ENCODE measurements at regions of chr22 and their contacts with region 1.

Region 1: GRCh38 chr22:42437488-42438292 is 5.5 kb upstream of the NFAM1 start:
- DNase-seq: peak; percentile 78 to 89
- H3K4me3 ChIP-seq: peak overlapping the region; percentile 40 to 56 (median 48)
- H3K27ac ChIP-seq: peak overlapping the region in 4 of 5 donors; percentile 35 to 65 (median 42)
- H3K4me1 ChIP-seq: peaks cover 7 to 57% (median 24%) of the 10 kb centered on the region in 4 donors
- H3K27me3 ChIP-seq: peaks cover 0 to 27% (median 0%) of the 10 kb centered on the region in 3 donors
- CTCF ChIP-seq: peak in 6 of 7 experiments; percentile 14 to 99 (median 94)
- EP300 ChIP-seq: no peak
- POLR2A ChIP-seq: no peak

Region 2: GRCh38 chr22:42101199-42101598 is 336.5 kb before region 1 on chr22:
- intact Hi-C with region 1: loop called (anchors 10 kb)
- DNase-seq: no peak
- H3K4me3 ChIP-seq: no peak overlapping the region
- H3K27ac ChIP-seq: no peak overlapping the region
- H3K4me1 ChIP-seq: no peaks in the 10 kb centered on the region
- H3K27me3 ChIP-seq: no peaks in the 10 kb centered on the region
- CTCF ChIP-seq: no peak
- EP300 ChIP-seq: no peak
- POLR2A ChIP-seq: no peak

Region 3: GRCh38 chr22:42169055-42169469 is 268.6 kb before region 1 on chr22:
- intact Hi-C with region 1: loop called (anchors 5 kb)
- DNase-seq: peak; percentile 67 to 92
- H3K4me3 ChIP-seq: no peak overlapping the region
- H3K27ac ChIP-seq: no peak overlapping the region
- H3K4me1 ChIP-seq: peaks cover 0 to 31% (median 18%) of the 10 kb centered on the region in 4 donors
- H3K27me3 ChIP-seq: no peaks in the 10 kb centered on the region
- CTCF ChIP-seq: peak in 6 of 7 experiments; percentile 46 to 96 (median 82)
- EP300 ChIP-seq: no peak
- POLR2A ChIP-seq: no peak

Region 4: GRCh38 chr22:42581762-42582716 is 144.3 kb after region 1 on chr22:
- intact Hi-C with region 1: no loop called
- DNase-seq: peak; percentile 80 to 95
- H3K4me3 ChIP-seq: peak overlapping the region; percentile 71 to 94 (median 88)
- H3K27ac ChIP-seq: peak overlapping the region; percentile 32 to 86 (median 73)
- H3K4me1 ChIP-seq: peaks cover 5 to 18% (median 15%) of the 10 kb centered on the region in 4 donors
- H3K27me3 ChIP-seq: no peaks in the 10 kb centered on the region
- CTCF ChIP-seq: no peak
- EP300 ChIP-seq: no peak
- POLR2A ChIP-seq: no peak

Region 5: DNA sequence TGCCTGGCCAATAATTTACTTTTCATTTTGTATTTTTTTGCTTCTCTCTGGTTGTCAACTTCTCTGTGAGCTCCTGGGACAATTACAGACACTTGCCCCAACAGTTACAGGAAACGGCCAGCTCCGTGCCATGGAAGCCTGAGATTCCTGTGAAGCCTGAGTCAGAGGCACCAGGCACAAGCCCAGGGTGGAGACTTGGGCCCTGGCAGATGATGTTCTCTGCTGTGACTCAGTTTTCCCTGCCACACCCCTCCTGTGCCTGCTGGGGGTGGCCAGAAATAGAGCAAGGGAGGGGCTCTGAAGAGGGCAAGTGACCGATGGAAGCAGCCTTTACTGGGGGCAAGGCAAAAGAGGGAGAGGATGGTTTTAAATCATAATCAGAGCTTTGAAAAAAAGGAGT is 197.8 kb after region 1 on chr22:
- intact Hi-C with region 1: no loop called
- DNase-seq: peak in 1 of 2 donors; percentile 67
- H3K4me3 ChIP-seq: no peak overlapping the region
- H3K27ac ChIP-seq: peak overlapping the region; percentile 61 to 86 (median 80)
- H3K4me1 ChIP-seq: peaks cover 8 to 34% (median 19%) of the 10 kb centered on the region in 4 donors
- H3K27me3 ChIP-seq: no peaks in the 10 kb centered on the region
- CTCF ChIP-seq: no peak
- EP300 ChIP-seq: no peak
- POLR2A ChIP-seq: no peak

Measured in stomach (tissue), 19 donors.